Activated B cell treated with CpG ODN at 0.5 μM for 24 hours (primary cell): ENCODE measurements at regions of chr16 and their contacts with region 1.

Region 1: GRCh38 chr16:22190776-22191531 is 15.1 kb upstream of the EEF2K start:
- DNase-seq: peak; percentile 98
- ATAC-seq: peak; percentile 65
- H3K4me3 Mint-ChIP-seq: peak overlapping the region; percentile 95
- H3K27ac Mint-ChIP-seq: peak overlapping the region; percentile 100
- H3K4me1 Mint-ChIP-seq: peaks cover 77% of the 10 kb centered on the region
- H3K27me3 Mint-ChIP-seq: peaks cover 2% of the 10 kb centered on the region
- CTCF ChIP-seq: no peak

Region 2: GRCh38 chr16:21599233-21600030 is 591.5 kb before region 1 on chr16 and contains the start of gene METTL9:
- CTCF ChIA-PET with region 1: no interaction called
- POLR2A ChIA-PET with region 1: no interaction called
- intact Hi-C with region 1: loop called (anchors 5 kb)
- DNase-seq: peak; percentile 94
- ATAC-seq: peak; percentile 92
- H3K4me3 Mint-ChIP-seq: peak within 1 kb of the TSS; percentile 89
- H3K27ac Mint-ChIP-seq: peak within 1 kb of the TSS; percentile 93
- H3K4me1 Mint-ChIP-seq: peaks cover 33% of the 10 kb centered on the region
- H3K27me3 Mint-ChIP-seq: no peaks in the 10 kb centered on the region
- CTCF ChIP-seq: no peak
- total RNA-seq, gene METTL9: 53.3 and 59.2 TPM in 2 replicates

Region 3: DNA sequence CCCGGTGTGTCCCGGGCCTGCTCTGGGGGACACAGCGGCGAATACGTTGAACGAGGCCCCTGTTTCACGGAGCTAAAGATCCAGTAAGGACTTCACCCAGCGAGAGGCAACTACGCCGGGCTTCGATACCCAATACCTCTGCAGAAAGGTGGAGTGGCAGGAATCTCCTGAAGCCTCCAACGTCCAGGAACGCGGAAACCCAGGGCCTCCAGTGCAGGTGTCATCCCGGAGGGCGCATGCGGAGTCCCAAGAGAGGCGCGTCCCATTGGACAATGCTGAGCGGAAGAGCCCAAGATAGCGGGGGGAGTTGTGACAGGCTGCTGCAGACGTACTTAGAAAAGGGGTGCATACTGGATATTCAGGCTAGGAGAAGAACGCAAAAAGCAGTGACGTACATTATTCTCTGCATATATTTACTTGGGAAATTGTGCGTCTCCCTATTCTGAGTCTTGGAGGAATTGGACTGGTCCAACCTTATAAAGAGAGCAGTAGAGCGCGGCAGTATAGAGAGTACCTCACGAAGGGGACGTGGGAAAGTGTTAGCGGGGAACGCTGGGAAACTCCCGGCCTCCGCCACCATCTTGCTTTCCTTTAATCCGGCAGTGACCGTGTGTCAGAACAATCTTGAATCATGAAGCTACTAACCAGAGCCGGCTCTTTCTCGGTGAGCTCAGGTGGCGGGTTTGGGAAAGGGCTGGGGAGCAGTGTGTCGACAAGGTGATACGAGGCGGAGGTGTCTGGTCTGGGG is 238.0 kb before region 1 on chr16 and contains the start of gene UQCRC2:
- CTCF ChIA-PET with region 1: interaction called, 11 read pairs
- POLR2A ChIA-PET with region 1: interaction called, 24 read pairs
- intact Hi-C with region 1: loop called (anchors 1 kb)
- DNase-seq: peak; percentile 76
- ATAC-seq: peak; percentile 89
- H3K4me3 Mint-ChIP-seq: peak within 1 kb of the TSS; percentile 98
- H3K27ac Mint-ChIP-seq: peak within 1 kb of the TSS; percentile 98
- H3K4me1 Mint-ChIP-seq: peaks cover 65% of the 10 kb centered on the region
- H3K27me3 Mint-ChIP-seq: no peaks in the 10 kb centered on the region
- CTCF ChIP-seq: no peak
- total RNA-seq, gene UQCRC2: 207 and 230 TPM in 2 replicates

Region 4: DNA sequence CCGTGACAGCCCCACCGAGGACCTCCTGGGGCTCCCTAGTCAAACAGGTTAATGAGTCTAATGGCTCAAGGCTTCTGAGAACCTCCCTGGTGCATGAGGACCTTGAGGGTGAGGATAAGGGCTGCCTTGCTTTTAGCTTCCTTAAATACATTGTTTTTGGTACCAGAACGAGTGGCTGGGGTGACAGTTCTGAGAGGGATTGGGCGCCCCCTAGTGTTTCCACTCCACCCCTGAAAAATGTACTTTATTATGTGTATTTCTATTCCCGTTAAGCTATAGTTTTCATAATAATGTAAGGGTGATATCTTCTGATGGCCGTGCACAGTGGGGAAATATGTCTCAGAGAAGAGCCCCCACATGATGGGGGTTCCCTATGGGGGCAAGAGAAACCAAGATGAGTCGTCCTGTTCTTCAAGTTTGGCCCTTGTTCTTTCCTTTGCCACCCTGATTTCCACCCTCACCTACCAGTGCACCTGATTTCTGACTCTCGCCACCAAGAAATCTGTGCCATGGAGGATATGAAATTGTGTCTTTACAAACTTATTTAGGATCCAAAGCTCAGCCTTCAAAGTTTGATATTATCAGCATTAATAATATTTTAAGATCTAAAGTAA is 113.1 kb before region 1 on chr16:
- CTCF ChIA-PET with region 1: interaction called, 60 read pairs
- POLR2A ChIA-PET with region 1: interaction called, 6 read pairs
- intact Hi-C with region 1: loop called (anchors 1 kb)
- DNase-seq: peak; percentile 49
- ATAC-seq: peak; percentile 60
- H3K4me3 Mint-ChIP-seq: no peak overlapping the region
- H3K27ac Mint-ChIP-seq: no peak overlapping the region
- H3K4me1 Mint-ChIP-seq: no peaks in the 10 kb centered on the region
- H3K27me3 Mint-ChIP-seq: no peaks in the 10 kb centered on the region
- CTCF ChIP-seq: peak; percentile 91

Region 5: DNA sequence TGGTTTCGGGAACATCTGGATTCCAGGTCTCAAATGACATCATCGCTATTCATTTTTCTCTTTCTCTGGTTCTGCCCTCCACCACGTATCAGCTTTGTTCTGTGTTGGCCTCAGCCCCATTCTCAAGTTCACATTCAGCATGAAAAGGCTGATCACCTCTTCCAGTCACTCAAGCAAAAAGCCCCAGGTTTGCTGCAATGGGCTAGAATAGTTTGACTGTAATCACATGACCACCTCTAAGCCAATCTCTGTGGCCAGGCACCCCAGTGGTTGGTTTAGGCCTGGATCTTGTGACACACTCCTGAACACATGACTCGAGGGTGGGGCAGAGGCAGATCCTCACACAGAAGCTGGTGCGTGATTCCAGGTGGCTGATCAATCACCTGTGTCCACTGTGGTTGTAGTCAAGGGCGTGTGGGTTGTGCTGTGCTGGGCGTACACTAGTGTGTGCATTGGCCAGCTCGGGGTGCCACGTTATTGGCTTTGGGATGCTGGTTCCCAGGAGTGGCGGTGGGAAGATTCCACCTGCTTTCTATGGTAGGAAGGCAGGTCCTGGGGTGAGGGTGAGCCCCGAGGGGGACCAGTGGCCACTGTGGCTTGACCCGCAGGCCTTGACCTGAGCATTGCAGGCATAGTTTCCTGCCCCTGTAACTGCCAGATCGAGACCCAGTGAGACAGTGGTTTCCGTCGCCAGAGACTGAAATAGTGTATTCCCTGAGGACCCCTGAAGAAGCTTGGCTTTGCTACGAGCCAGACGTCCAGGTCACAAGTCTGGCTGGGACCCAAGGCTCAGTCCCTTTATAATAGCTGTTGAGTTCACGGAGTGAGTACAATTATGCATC is 27.2 kb after region 1 on chr16:
- CTCF ChIA-PET with region 1: interaction called, 3 read pairs
- POLR2A ChIA-PET with region 1: interaction called, 12 read pairs
- intact Hi-C with region 1: no loop called
- DNase-seq: peak; percentile 29
- ATAC-seq: peak; percentile 86
- H3K4me3 Mint-ChIP-seq: peak overlapping the region; percentile 52
- H3K27ac Mint-ChIP-seq: peak overlapping the region; percentile 85
- H3K4me1 Mint-ChIP-seq: peaks cover 26% of the 10 kb centered on the region
- H3K27me3 Mint-ChIP-seq: no peaks in the 10 kb centered on the region
- CTCF ChIP-seq: no peak

Region 6: GRCh38 chr16:22425036-22425801 is 234.3 kb after region 1 on chr16:
- CTCF ChIA-PET with region 1: no interaction called
- POLR2A ChIA-PET with region 1: no interaction called
- intact Hi-C with region 1: loop called (anchors 10 kb)
- DNase-seq: no peak
- ATAC-seq: no peak
- H3K4me3 Mint-ChIP-seq: no peak overlapping the region
- H3K27ac Mint-ChIP-seq: no peak overlapping the region
- H3K4me1 Mint-ChIP-seq: no peaks in the 10 kb centered on the region
- H3K27me3 Mint-ChIP-seq: no peaks in the 10 kb centered on the region
- CTCF ChIP-seq: no peak